PC-9 (cell line): ENCODE measurements at regions of chr5 and their contacts with region 1.

Region 1: GRCh38 chr5:74316064-74316679 is 324.4 kb downstream of the ENC1 start:
- DNase-seq: peak; percentile 94 to 98
- H3K4me3 ChIP-seq: no peak overlapping the region
- H3K27ac ChIP-seq: peak overlapping the region; percentile 98
- H3K4me1 ChIP-seq: peaks cover 65% of the 10 kb centered on the region
- H3K27me3 ChIP-seq: no peaks in the 10 kb centered on the region
- CTCF ChIP-seq: no peak

Region 2: DNA sequence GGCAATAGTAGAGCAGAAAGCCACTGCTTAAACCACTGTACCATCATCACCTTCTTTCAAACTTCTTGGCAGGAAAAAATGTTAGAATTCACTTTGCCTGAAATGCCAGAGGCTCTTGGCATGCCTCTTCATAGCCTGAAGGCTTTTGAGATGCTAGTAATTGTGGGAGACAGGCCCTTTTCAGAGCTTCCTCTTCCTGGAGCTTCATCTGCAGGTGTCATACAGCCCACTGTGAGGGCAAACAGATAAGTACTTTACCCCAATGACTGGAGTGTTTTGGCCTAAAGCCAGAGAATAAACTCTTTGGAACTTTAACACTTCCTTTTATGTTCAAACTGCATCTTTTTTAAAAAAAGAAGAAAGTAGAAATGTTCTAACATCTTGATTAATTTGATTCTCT is 1277.1 kb before region 1 on chr5:
- CTCF ChIA-PET with region 1: no interaction called
- POLR2A ChIA-PET with region 1: no interaction called
- intact Hi-C with region 1: no loop called
- DNase-seq: peak; percentile 29 to 63
- H3K4me3 ChIP-seq: no peak overlapping the region
- H3K27ac ChIP-seq: 0 out of 2 replicates have a peak overlapping the region, but pooled peaks have one; percentile 3
- H3K4me1 ChIP-seq: peaks cover 6% of the 10 kb centered on the region; the same call in 1 of the 2 replicates
- H3K27me3 ChIP-seq: no peaks in the 10 kb centered on the region
- CTCF ChIP-seq: no peak

Region 3: DNA sequence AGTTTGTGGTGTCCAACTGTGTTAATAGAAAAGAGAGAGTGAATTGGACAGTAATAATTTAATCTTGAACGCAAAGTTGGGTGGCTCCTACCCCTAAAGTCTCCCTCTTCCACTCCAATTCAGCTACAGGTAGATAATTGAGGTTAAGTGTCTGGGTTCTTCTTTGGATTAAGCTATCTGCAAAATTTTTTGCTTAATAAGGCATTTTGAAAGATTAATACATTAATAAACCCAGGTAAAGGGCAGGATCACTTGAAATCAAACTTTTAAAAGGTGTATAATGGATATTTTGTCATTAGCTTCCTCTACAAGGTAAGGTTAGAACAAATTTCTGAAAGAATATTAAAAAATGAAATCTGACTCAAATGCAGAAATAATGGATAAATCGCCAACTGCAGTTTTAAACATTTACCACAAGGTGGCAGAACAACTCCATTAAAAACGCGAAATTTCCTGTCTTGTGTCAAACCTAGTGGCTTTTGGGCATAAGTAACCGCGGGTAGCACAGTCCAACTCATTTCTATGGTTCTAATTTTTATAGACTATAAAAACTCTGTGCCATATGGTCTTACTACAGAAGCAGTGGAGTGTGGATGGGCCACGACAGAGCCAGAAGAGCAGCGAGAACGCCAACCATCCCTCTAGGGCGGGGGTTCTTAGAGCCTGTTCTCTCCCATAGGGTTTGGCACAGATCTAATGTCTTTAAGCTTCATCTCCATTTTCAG is 413.7 kb before region 1 on chr5:
- CTCF ChIA-PET with region 1: no interaction called
- POLR2A ChIA-PET with region 1: no interaction called
- intact Hi-C with region 1: loop called (anchors 10 kb)
- DNase-seq: no peak
- H3K4me3 ChIP-seq: no peak overlapping the region
- H3K27ac ChIP-seq: peak overlapping the region; percentile 89
- H3K4me1 ChIP-seq: peaks cover 44% of the 10 kb centered on the region
- H3K27me3 ChIP-seq: no peaks in the 10 kb centered on the region
- CTCF ChIP-seq: peak; percentile 92

Region 4: GRCh38 chr5:73962801-73963425 is 353.3 kb before region 1 on chr5:
- CTCF ChIA-PET with region 1: no interaction called
- POLR2A ChIA-PET with region 1: no interaction called
- intact Hi-C with region 1: loop called (anchors 1 kb)
- DNase-seq: peak; percentile 62 to 89
- H3K4me3 ChIP-seq: no peak overlapping the region
- H3K27ac ChIP-seq: peak overlapping the region; percentile 62
- H3K4me1 ChIP-seq: peaks cover 6% of the 10 kb centered on the region
- H3K27me3 ChIP-seq: no peaks in the 10 kb centered on the region
- CTCF ChIP-seq: no peak

Region 5: GRCh38 chr5:74035521-74035981 is 280.6 kb before region 1 on chr5:
- CTCF ChIA-PET with region 1: no interaction called
- POLR2A ChIA-PET with region 1: interaction called, 9 read pairs
- intact Hi-C with region 1: loop called (anchors 1 kb)
- DNase-seq: peak; percentile 69 to 83
- H3K4me3 ChIP-seq: no peak overlapping the region
- H3K27ac ChIP-seq: peak overlapping the region; percentile 58
- H3K4me1 ChIP-seq: peaks cover 18% of the 10 kb centered on the region
- H3K27me3 ChIP-seq: no peaks in the 10 kb centered on the region
- CTCF ChIP-seq: peak; percentile 65

Region 6: DNA sequence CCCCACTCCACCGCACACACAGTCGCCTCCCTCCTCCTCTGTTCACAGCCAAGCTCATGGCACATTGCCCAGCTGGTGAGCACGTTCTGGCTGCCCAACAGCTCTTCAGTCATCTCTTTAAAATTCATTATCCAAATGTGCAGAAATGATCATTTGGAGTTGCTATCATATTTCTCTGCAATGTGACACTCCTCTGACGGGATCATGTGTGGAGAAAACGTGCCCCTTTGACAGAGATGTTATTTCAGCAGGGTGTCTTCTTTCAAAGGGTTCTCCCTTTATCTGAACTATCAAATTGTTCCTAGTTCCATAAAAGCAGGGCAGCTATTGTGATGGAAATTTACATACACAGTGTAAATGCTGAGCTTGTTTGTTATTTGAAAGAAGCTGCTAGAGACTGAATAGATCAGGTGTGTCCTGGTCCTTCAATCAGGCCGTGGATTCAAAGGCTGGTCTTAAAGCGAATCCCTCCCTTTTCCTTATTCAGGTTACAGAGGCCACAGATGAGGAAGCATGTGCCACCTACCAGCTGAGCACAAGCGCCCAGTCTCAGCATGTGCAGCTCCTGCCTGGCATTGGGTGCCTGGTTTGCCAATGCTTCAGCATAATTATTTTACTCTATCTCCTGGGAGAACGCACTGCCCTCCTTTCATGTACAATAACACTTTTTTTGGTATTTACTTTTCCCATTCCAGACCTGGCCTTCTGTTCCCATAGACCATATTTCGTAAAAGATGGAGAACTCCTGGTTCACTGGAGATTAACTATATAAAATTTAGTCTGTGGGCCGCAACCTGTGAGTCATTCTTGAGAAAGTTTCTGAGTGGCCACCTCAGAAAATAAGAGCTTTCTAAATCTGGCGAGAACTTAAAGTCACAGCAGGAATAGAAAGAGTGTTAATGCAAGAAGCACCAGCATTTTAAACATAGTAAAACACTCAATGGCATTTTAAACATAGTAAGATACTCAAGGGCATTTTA is 109.3 kb before region 1 on chr5:
- CTCF ChIA-PET with region 1: no interaction called
- POLR2A ChIA-PET with region 1: interaction called, 3 read pairs
- intact Hi-C with region 1: loop called (anchors 2 kb)
- DNase-seq: peak in 1 of 2 experiments; percentile 74
- H3K4me3 ChIP-seq: no peak overlapping the region
- H3K27ac ChIP-seq: no peak overlapping the region
- H3K4me1 ChIP-seq: peaks cover 18% of the 10 kb centered on the region
- H3K27me3 ChIP-seq: no peaks in the 10 kb centered on the region
- CTCF ChIP-seq: no peak

Region 7: GRCh38 chr5:74251141-74252035 is 64.8 kb before region 1 on chr5:
- CTCF ChIA-PET with region 1: no interaction called
- POLR2A ChIA-PET with region 1: interaction called, 3 read pairs
- intact Hi-C with region 1: loop called (anchors 2 kb)
- DNase-seq: peak; percentile 71 to 96
- H3K4me3 ChIP-seq: no peak overlapping the region
- H3K27ac ChIP-seq: peak overlapping the region; percentile 93
- H3K4me1 ChIP-seq: peaks cover 40% of the 10 kb centered on the region
- H3K27me3 ChIP-seq: no peaks in the 10 kb centered on the region
- CTCF ChIP-seq: no peak

Region 8: DNA sequence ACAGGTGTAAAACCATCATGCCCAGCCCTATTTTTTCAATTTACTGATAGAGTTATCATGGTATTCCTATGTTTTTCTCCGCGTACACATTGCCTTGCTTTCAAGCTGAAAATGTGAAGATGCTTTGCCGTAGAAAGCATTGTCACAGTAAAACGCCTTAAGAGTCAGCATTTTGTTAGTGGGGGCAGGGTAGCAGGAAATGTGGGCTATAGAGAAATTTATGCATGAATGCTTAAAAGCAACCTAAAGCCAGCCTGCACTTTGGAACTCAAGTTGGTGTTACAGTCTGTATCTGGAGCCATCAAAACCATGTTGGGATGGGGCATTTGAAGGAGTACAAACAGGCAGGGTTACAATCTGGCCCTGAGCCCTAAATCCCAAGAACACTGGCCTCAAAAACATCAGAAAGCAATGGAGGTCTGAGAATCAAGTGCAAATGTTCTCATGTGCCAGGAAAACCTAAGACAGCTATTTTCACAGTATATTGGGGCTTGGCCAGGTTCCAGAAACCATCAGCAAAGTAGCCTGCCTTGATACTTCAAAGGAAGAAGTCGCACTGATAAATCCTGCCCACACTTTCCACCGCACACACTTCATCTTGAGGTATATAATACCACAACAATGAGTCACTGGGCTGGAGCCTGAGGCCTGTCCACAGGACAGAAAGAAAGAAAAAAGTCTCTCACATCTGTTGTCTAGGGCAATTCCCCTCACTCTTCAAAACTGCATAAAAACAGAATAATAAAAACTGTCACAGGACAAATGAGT is 10.6 kb after region 1 on chr5:
- CTCF ChIA-PET with region 1: no interaction called
- POLR2A ChIA-PET with region 1: no interaction called
- intact Hi-C with region 1: loop called (anchors 1 kb)
- DNase-seq: peak; percentile 82 to 97
- H3K4me3 ChIP-seq: no peak overlapping the region
- H3K27ac ChIP-seq: peak overlapping the region; percentile 89
- H3K4me1 ChIP-seq: peaks cover 40% of the 10 kb centered on the region
- H3K27me3 ChIP-seq: no peaks in the 10 kb centered on the region
- CTCF ChIP-seq: no peak

Region 9: DNA sequence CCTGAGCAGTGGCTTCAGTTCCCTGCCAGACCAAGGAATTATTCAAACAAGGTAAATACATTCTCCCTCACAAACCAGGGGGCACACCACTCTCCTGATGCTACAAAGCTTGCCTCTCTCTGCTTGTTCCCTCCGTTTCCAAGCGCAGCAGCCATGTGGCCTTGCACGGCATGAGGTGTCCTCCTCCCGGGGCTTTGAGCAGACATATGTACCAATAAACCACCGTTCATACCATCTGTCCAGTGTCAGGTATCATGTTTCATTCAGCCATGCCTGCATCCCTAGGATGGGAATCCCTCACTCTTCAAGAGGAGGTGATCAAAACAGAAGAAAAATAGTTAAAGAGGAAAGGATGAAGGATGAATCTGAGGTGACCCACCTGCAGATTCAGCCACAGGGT is 41.7 kb after region 1 on chr5:
- CTCF ChIA-PET with region 1: no interaction called
- POLR2A ChIA-PET with region 1: no interaction called
- intact Hi-C with region 1: no loop called
- DNase-seq: no peak
- H3K4me3 ChIP-seq: no peak overlapping the region
- H3K27ac ChIP-seq: no peak overlapping the region
- H3K4me1 ChIP-seq: 0 out of 2 replicates have a peak, but pooled peaks cover 3% of the 10 kb centered on the region
- H3K27me3 ChIP-seq: no peaks in the 10 kb centered on the region
- CTCF ChIP-seq: no peak

Region 10: DNA sequence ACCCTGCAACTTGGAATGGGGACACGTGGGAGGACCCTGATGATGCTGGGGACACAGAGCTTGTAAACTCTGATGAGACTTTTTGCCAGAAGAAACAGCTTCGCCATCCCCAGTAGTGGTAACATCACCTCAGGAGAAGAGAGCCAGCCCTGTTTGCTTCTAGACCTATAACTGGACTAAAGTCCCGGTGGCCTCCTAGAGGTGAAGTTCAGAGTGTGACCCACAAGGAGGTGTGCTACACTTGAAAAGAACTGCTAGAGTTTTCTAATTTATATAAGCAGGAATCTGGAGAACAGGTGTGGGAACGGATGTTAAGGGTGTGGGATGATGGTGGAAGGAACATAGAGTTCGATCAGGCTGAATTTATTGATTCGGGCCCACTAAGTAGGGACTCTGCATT is 470.7 kb after region 1 on chr5:
- CTCF ChIA-PET with region 1: no interaction called
- POLR2A ChIA-PET with region 1: no interaction called
- intact Hi-C with region 1: no loop called
- DNase-seq: no peak
- H3K4me3 ChIP-seq: no peak overlapping the region
- H3K27ac ChIP-seq: no peak overlapping the region
- H3K4me1 ChIP-seq: no peaks in the 10 kb centered on the region
- H3K27me3 ChIP-seq: no peaks in the 10 kb centered on the region
- CTCF ChIP-seq: no peak